ENCODE measurements at regions of chr4 and their contacts with region 1.

Region 1: DNA sequence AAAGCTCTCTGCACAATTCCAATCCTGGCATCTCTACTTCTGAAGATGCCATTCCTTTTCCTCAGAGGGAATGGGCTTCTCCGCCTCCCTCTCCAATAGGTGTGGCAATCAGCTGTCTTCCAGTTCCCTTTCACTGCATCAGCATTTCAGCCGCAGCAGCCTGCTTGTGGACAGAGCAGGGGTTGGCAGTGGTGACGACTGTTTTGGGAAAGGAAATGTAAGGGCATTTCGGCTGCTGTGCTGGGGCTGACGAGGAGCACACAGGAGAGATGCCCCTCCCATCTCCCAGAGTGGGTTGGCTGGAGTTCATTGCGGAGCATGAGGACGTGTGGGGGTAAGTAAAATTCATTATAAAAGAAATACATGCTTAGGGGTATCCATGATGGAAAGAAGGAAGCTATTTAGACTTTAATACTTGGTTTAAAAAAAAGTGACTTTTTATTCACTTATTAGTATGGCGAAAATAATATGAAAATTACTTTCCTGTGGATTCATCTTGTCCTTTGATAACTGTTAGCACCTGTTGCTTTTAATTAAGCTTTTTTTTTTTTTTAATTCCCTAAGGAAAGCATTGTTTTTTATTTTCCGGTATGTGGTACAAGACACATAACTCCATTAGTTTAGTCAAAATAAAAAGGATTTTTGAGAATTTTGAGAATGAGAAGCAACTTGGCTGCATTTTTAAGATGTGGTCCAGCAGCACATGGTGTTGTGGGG is at the start of gene LIMCH1:
- DNase-seq: peak; percentile 86
- total RNA-seq, gene LIMCH1: 291 TPM

Region 2: GRCh38 chr4:41427306-41427882 is 110.8 kb before region 1 on chr4:
- intact Hi-C with region 1: loop called (anchors 5 kb)
- DNase-seq: no peak

Region 3: GRCh38 chr4:41569961-41570360 is 31.8 kb after region 1 on chr4:
- intact Hi-C with region 1: loop called (anchors 5 kb)
- DNase-seq: no peak

Region 4: DNA sequence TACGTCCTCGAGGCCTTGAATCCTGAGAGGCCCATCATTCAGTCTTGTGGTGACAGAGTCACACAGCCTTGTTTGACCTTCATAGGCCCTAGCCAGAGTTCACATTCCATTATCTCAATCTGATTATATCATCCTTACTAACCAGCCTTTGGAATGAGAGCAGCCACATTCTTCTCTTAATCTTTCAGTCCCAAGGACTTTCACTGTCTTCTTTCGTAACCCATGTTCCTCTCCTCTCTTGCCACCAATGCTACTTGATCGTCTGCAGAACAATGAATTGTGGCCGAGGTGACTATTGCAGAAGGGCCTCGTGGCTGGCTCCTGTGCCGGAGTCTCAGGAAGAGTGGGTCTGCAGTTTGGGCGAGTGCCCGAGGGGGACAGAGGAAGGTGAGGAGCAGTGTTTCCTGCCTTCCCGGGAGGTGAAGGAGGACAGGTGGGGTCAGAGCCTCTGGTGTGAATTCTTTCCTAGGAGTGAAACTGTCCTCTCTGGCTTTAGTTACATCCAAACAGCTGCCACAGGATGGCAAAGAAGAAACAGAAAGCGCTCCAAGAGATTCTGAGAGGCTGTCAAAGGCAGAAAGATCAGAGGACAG is 94.4 kb after region 1 on chr4:
- intact Hi-C with region 1: no loop called
- DNase-seq: no peak

Region 5: DNA sequence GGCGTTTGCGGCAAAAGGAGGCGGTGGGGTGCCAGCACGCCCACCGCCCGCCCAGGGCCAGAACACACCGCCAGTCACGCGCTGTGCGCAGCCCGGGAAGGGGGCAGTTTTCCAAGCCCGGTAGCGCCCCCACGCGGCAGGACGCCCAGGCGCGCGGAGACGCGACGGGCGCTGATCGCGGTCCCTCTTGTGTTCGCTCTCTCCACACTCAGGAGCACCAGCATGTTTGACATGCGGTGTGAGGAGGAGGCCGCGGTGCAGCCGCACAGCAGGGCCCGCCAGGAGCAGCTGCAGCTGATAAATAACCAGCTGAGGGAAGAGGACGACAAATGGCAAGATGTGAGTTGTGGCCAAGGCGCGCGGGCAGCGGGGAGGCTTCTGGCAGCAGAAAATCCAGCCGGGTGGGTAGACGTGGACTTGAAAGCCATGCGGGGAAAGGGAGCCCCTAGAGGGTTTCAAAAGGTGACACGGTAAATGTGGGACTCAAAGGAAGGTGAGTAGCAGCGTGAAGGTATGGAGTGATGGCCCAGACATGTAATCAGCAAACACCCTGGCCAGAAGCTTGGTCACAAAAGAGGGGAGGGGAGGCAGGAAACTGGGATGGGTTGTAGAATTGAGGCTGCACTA is 106.2 kb after region 1 on chr4:
- intact Hi-C with region 1: loop called (anchors 5 kb)
- DNase-seq: peak; percentile 80

Region 6: GRCh38 chr4:41661442-41662076 is 123.4 kb after region 1 on chr4:
- intact Hi-C with region 1: no loop called
- DNase-seq: no peak

Region 7: DNA sequence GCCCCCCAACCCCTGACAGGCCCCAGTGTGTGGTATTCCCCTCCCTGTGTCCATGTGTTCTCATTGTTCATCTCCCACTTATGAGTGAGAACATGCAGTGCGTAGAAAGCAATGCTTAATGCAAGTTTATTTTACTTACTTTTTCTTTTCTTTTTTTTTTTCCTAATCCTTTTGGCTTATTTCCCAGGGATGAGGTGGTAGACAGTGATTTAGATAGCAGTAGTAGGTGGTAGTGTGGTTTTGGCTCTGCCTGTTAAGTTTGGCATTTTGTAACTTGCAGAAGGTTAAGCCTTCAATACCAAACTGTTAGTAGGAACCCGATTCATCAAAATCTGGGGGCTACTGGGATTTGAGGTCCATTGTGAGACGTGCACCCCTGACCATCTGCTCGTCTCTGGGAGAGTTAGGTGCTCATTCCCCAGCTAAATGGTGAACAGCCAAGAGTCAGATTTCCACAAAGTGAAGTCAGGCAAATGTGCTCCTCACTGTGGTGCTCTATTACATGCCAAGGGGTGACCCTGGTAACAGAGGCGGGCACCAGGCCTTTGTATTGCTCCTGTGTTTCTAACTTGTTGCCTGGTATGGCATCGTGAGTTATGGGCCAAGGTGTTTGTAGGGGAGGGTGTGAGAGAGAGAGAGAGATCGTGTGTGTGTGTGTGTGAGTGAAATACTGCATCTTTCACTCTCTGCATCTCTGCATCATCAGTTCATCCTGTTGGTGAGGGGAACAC is 140.1 kb after region 1 on chr4:
- intact Hi-C with region 1: no loop called
- DNase-seq: no peak